ENCODE measurements at regions of chr12 and their contacts with region 1.

Region 1: GRCh38 chr12:101759396-101760047 is 20.3 kb upstream of the SYCP3 start:
- DNase-seq: no peak
- H3K4me3 ChIP-seq: no peak overlapping the region
- H3K27ac ChIP-seq: no peak overlapping the region
- H3K4me1 ChIP-seq: peaks cover 8% of the 10 kb centered on the region
- H3K27me3 ChIP-seq: no peaks in the 10 kb centered on the region
- CTCF ChIP-seq: peak; percentile 83

Region 2: GRCh38 chr12:100913872-100914592 is 845.5 kb before region 1 on chr12:
- CTCF ChIA-PET with region 1: no interaction called
- POLR2A ChIA-PET with region 1: no interaction called
- intact Hi-C with region 1: no loop called
- DNase-seq: no peak
- H3K4me3 ChIP-seq: no peak overlapping the region
- H3K27ac ChIP-seq: no peak overlapping the region
- H3K4me1 ChIP-seq: no peaks in the 10 kb centered on the region
- H3K27me3 ChIP-seq: peaks cover 6% of the 10 kb centered on the region; the same call in 1 of the 2 replicates
- CTCF ChIP-seq: no peak

Region 3: DNA sequence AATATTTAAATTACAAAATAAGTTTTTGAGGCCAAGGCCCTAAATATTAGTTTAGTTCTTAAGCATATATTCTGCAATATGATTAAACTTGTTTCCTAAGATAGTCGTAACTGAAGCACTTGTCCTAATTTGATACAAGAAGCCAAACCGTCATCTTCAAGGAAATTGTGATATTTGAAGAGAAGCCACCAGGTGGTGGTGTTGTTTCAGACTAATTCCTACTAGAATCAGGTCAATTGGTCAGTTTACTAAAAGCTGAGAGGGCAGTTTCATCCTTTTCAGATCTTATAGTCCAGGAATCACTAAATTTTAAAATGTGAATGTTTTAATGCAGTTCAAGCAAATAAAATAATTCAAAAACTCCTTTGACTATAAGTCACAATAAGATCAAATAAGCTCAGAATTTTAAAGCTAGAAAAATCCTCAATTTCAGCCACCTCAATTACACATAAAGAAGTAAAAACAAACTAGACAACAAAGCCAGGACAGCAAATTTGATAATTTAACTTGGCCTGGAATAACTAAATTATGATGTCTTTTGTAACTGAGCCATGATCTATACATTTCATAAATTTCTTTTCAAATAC is 344.9 kb before region 1 on chr12:
- CTCF ChIA-PET with region 1: interaction called, 3 read pairs
- POLR2A ChIA-PET with region 1: no interaction called
- intact Hi-C with region 1: loop called (anchors 2 kb)
- DNase-seq: peak; percentile 29 to 62
- H3K4me3 ChIP-seq: no peak overlapping the region
- H3K27ac ChIP-seq: no peak overlapping the region
- H3K4me1 ChIP-seq: peaks cover 8% of the 10 kb centered on the region
- H3K27me3 ChIP-seq: no peaks in the 10 kb centered on the region
- CTCF ChIP-seq: peak; percentile 76

Region 4: DNA sequence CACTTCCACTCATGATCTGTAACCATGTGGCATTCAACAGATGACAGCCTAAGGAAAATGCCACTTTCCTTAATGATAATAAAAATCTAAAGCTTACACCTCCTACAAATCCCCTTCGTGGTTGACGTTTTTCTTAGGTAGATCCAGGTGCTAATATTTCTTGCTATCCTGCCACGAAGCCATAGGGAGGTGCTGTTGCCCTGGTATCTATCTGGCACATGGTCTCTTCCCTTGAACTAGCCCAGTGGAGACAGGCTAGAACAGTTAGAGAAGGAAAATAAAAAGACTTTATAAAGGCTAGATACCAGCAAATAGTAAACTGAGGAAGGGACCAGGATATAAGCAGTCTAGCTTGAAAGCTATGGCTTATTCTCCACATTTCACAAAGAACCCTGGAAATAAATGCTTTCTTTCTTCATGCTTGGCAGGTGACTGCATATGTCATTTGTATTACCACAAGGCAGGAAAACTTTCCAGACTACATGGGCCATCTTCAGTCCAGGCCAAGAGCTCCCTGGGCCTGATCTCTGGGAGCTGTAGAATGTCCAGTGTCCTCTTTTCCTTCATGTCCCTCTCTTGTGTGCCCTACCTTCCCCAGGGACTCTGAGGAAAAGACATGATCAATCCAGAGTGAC is 269.1 kb before region 1 on chr12:
- CTCF ChIA-PET with region 1: no interaction called
- POLR2A ChIA-PET with region 1: no interaction called
- intact Hi-C with region 1: loop called (anchors 5 kb)
- DNase-seq: peak in 1 of 2 experiments; percentile 3
- H3K4me3 ChIP-seq: no peak overlapping the region
- H3K27ac ChIP-seq: no peak overlapping the region
- H3K4me1 ChIP-seq: no peaks in the 10 kb centered on the region
- H3K27me3 ChIP-seq: no peaks in the 10 kb centered on the region
- CTCF ChIP-seq: peak; percentile 67

Region 5: DNA sequence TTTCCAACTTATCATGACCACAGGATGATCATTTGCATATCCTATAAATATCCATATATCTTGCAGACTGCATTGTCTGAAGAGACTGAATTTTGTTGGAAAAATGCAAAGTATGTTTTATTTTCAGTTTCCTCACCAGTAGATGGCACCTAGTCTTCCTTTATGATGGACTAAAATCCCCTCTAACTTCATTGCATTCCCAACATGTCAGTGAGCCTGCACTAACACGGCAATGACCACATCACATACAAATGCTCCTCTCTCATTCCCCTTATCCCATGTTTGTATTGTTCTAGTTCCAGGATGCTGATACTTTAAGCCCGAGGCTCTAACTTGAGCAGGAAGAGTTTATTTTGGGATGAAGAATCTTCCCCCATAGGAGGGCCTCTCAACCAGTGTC is 189.5 kb before region 1 on chr12:
- CTCF ChIA-PET with region 1: no interaction called
- POLR2A ChIA-PET with region 1: no interaction called
- intact Hi-C with region 1: loop called (anchors 5 kb)
- DNase-seq: peak in 1 of 2 experiments; percentile 47
- H3K4me3 ChIP-seq: no peak overlapping the region
- H3K27ac ChIP-seq: no peak overlapping the region
- H3K4me1 ChIP-seq: peaks cover 4% of the 10 kb centered on the region; the same call in 1 of the 2 replicates
- H3K27me3 ChIP-seq: no peaks in the 10 kb centered on the region
- CTCF ChIP-seq: peak; percentile 65

Region 6: DNA sequence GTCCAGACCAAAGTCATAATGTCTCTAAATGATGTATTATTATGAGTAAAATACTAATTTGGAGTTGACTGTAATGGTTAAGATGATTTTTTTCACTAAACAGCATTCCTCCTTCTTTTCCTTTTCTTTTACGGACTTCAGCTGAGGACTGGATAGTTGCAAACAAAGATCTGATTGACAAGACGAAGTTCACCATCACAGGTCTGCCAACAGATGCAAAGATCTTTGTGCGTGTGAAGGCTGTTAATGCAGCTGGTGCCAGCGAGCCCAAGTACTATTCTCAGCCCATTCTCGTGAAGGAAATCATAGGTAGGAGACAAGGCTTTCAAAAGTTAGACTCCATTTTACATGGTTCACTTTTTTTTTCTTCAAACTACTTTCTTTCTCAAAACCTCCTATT is 91.9 kb before region 1 on chr12:
- CTCF ChIA-PET with region 1: no interaction called
- POLR2A ChIA-PET with region 1: interaction called, 20 read pairs
- intact Hi-C with region 1: no loop called
- DNase-seq: no peak
- H3K4me3 ChIP-seq: no peak overlapping the region
- H3K27ac ChIP-seq: no peak overlapping the region
- H3K4me1 ChIP-seq: no peaks in the 10 kb centered on the region
- H3K27me3 ChIP-seq: no peaks in the 10 kb centered on the region
- CTCF ChIP-seq: no peak

Region 7: DNA sequence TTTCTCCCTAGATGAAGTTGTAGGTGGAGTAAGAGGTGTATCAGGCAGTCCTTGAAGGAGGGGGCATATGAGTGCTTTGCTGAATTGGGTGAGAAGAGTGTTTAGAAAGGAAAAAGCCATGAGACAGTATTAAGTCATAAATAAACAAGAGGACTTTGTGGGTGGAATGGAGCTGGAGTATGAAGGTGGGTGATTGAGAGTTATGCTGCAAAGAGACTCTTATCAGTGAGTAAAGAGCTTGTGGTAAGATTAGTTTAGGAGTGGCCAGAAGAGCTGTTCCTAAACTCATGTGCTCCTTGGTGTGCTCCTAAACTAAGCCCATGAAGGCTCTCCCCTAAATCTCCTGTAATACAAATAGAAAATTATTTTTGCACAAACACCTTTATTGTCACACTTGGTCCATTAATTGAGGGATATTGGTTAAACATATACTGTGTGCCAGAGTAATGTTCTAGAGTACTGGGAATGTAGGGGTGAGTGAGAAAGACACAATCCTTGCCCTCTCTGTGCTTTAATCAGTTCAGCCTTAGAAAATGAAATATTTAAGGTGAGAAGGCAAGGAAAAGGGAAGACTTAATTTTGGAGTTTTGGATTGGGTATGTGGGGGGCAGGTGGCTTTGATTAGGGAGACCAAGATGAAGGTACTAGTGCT is 52.3 kb before region 1 on chr12:
- CTCF ChIA-PET with region 1: no interaction called
- POLR2A ChIA-PET with region 1: no interaction called
- intact Hi-C with region 1: no loop called
- DNase-seq: no peak
- H3K4me3 ChIP-seq: no peak overlapping the region
- H3K27ac ChIP-seq: no peak overlapping the region
- H3K4me1 ChIP-seq: no peaks in the 10 kb centered on the region
- H3K27me3 ChIP-seq: no peaks in the 10 kb centered on the region
- CTCF ChIP-seq: no peak

Measured in PC-9 (cell line).